Mammary epithelial cell (primary cell): ENCODE measurements at regions of chr15 and their contacts with region 1.

Region 1: GRCh38 chr15:52780172-52780980 is 9.8 kb downstream of the ONECUT1 start:
- DNase-seq: peak; percentile 41
- H3K4me3 ChIP-seq: no peak overlapping the region
- H3K27ac ChIP-seq: no peak overlapping the region
- H3K4me1 ChIP-seq: no peaks in the 10 kb centered on the region
- H3K27me3 ChIP-seq: peaks cover 34% of the 10 kb centered on the region
- CTCF ChIP-seq: peak; percentile 90 to 98

Region 2: GRCh38 chr15:52569257-52569611 is 211.1 kb before region 1 on chr15:
- CTCF ChIA-PET with region 1: no interaction called
- dilution Hi-C with region 1: no loop called
- in situ Hi-C with region 1: no loop called
- intact Hi-C with region 1: no loop called
- DNase-seq: no peak
- H3K4me3 ChIP-seq: peak overlapping the region; percentile 71 to 76 (median 74)
- H3K27ac ChIP-seq: peak overlapping the region; percentile 93
- H3K4me1 ChIP-seq: peaks cover 5% of the 10 kb centered on the region
- H3K27me3 ChIP-seq: no peaks in the 10 kb centered on the region
- CTCF ChIP-seq: no peak

Region 3: GRCh38 chr15:52737720-52738119 is 42.7 kb before region 1 on chr15:
- CTCF ChIA-PET with region 1: no interaction called
- dilution Hi-C with region 1: no loop called
- in situ Hi-C with region 1: no loop called
- intact Hi-C with region 1: no loop called
- DNase-seq: peak; percentile 46
- H3K4me3 ChIP-seq: no peak overlapping the region
- H3K27ac ChIP-seq: no peak overlapping the region
- H3K4me1 ChIP-seq: peaks cover 9% of the 10 kb centered on the region
- H3K27me3 ChIP-seq: no peaks in the 10 kb centered on the region
- CTCF ChIP-seq: no peak

Region 4: DNA sequence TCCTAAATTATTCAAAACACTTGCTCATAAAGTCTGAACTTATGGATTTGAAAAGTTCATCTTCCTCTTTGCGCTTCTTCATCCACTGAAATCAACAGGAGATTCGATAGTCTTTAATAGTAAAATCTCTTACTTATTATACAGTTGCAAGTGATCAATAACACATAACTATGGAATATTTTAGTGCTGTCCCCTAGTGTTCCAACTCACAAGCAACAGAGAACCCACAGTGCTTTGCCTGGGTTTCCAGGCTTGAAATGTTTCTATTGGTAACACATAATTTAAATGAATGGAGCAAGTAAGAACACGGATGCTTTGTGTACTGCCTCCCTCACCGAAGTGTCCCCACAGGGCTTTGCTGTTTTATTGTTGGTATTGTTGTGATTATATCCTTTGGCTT is 885.5 kb after region 1 on chr15:
- CTCF ChIA-PET with region 1: no interaction called
- dilution Hi-C with region 1: no loop called
- in situ Hi-C with region 1: no loop called
- intact Hi-C with region 1: loop called (anchors 5 kb)
- DNase-seq: no peak
- H3K4me3 ChIP-seq: no peak overlapping the region
- H3K27ac ChIP-seq: no peak overlapping the region
- H3K4me1 ChIP-seq: no peaks in the 10 kb centered on the region
- H3K27me3 ChIP-seq: no peaks in the 10 kb centered on the region
- CTCF ChIP-seq: peak; percentile 20 to 35